ENCODE measurements at regions of chrX and their contacts with region 1.

Region 1: DNA sequence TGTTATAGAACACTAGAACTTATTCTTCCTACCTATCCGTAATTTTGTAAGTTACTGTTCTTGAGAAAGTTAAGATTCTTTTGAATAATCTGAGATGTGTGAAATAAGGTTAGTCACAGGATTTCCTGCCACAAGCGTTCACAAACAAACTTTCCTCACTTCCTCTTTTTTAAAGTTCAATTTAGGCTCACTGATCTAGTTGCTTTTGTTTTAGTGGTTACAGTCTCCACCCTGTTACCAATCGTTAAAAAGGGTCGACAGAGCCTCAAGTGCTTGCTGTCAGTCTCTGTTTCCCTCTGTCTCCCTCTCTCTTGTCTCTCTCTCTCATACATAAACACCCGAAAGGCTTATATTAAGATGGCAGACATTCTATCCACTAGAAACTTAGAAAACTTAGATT is 35.9 kb upstream of the STK26 start:
- DNase-seq: peak; percentile 73
- H3K4me3 Mint-ChIP-seq: peak overlapping the region; percentile 70
- H3K27ac Mint-ChIP-seq: peak overlapping the region; percentile 96
- H3K4me1 Mint-ChIP-seq: peaks cover 25% of the 10 kb centered on the region
- H3K27me3 Mint-ChIP-seq: no peaks in the 10 kb centered on the region

Region 2: DNA sequence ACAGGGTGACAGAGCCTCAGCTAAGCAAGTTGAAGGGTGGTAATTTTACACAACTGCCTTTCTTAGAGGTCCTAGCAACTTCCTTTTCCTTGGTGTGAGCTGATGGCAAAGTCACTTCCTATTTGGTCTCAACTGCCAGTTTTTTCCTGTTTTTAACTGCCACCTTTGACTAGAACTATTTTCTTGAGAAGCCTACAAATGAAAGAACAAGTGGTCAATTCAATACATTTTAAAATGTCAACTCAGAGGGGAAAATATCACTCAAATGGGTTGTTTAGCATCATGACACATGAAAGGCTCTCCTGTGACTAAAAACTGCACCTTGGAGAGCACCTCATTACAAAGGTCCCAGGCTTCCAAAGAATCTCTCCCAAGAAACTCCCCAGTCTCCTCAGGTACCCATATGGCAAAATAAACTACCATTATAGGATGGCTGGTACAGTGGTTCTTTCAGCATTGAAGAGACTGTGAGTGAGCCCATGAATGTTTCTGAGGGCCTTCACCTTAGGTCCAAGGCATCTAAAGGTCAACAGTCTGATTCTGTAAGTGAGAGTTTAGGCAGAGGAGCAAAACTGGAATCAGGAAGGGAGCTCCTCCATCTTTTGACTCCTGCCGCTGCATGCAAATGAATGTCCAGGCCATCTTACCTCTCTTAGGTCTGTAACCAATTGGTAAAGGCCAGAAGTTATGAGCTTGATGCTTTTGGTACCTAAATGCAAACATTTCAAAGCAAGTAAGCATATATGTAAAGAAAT is 30.4 kb after region 1 on chrX:
- intact Hi-C with region 1: loop called (anchors 1 kb)
- DNase-seq: no peak
- H3K4me3 Mint-ChIP-seq: peak overlapping the region; percentile 49
- H3K27ac Mint-ChIP-seq: peak overlapping the region; percentile 82
- H3K4me1 Mint-ChIP-seq: peaks cover 20% of the 10 kb centered on the region
- H3K27me3 Mint-ChIP-seq: no peaks in the 10 kb centered on the region